ENCODE measurements at regions of chr17 and their contacts with region 1.

Region 1: GRCh38 chr17:39153599-39154051 is 2.2 kb upstream of the PLXDC1 start:
- DNase-seq: peak; percentile 90 to 94
- ATAC-seq: peak; percentile 65 to 69
- H3K4me3 ChIP-seq: peak overlapping the region; percentile 89
- H3K27ac ChIP-seq: peak overlapping the region; percentile 76 to 87
- H3K4me1 ChIP-seq: peaks cover 7% of the 10 kb centered on the region
- CTCF ChIP-seq: no peak; the same call in 2 of the 3 replicates
- EP300 ChIP-seq: no peak
- POLR2A ChIP-seq: no peak
- RAD21 ChIP-seq: no peak

Region 2: DNA sequence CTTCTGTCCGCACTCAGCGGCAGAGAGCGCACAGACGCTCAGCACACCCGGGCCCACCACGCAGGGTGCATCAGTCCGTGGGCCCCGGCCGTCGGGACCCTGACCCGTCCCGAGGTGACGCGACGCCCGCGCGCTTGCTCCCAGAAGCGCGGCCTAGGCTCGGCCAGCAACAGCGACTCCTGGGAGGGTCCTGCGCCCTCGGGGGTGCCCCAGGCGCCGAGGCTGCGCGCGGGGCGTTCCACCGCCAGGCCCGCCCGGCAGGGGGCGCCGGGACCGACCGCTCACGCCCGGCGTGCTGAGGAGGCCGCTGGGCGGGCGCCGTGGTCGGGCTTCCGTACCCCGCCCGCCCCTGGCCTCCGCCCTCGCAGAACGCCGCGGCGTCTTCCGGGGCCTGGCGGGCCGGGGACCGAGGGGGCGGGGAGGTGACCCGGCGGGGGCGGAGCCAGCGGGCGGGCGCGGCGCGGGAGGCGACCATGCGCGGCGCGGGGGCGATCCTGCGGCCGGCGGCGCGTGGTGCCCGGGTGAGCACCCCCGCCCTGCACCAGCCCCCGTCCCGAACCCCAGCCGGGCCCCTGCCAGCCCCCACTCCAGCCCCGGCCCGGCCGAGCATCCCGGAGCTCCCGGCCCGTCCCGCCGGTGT is 423.6 kb before region 1 on chr17 and contains the start of gene CISD3:
- CTCF ChIA-PET with region 1: interaction called, 11 read pairs
- POLR2A ChIA-PET with region 1: no interaction called
- DNase-seq: peak; percentile 86 to 88
- ATAC-seq: peak; percentile 77 to 79
- H3K4me3 ChIP-seq: peak within 1 kb of the TSS; percentile 77
- H3K27ac ChIP-seq: peak within 1 kb of the TSS; percentile 91 to 95
- H3K4me1 ChIP-seq: peaks cover 43% of the 10 kb centered on the region
- CTCF ChIP-seq: peak; percentile 98
- EP300 ChIP-seq: no peak
- POLR2A ChIP-seq: peak; percentile 59
- RAD21 ChIP-seq: peak; percentile 19 to 56; a peak in 4 of 5 replicates
- polyA plus RNA-seq, gene CISD3: 24.5 and 32.6 TPM in 2 replicates

Region 3: GRCh38 chr17:38868817-38869525 is 284.7 kb before region 1 on chr17:
- CTCF ChIA-PET with region 1: interaction called, 12 read pairs
- POLR2A ChIA-PET with region 1: interaction called, 11 read pairs
- DNase-seq: peak; percentile 92 to 93
- ATAC-seq: peak; percentile 25 to 65
- H3K4me3 ChIP-seq: peak overlapping the region; percentile 94
- H3K27ac ChIP-seq: peak overlapping the region; percentile 98
- H3K4me1 ChIP-seq: peaks cover 23% of the 10 kb centered on the region
- CTCF ChIP-seq: peak; percentile 51
- EP300 ChIP-seq: 0 out of 5 replicates have a peak, but pooled peaks of 1 of the 2 experiments have one; percentile 10
- POLR2A ChIP-seq: 0 out of 2 replicates have a peak, but pooled peaks have one; percentile 12
- RAD21 ChIP-seq: peak in 1 of 2 experiments; percentile 14; a peak in 1 of 5 replicates

Region 4: DNA sequence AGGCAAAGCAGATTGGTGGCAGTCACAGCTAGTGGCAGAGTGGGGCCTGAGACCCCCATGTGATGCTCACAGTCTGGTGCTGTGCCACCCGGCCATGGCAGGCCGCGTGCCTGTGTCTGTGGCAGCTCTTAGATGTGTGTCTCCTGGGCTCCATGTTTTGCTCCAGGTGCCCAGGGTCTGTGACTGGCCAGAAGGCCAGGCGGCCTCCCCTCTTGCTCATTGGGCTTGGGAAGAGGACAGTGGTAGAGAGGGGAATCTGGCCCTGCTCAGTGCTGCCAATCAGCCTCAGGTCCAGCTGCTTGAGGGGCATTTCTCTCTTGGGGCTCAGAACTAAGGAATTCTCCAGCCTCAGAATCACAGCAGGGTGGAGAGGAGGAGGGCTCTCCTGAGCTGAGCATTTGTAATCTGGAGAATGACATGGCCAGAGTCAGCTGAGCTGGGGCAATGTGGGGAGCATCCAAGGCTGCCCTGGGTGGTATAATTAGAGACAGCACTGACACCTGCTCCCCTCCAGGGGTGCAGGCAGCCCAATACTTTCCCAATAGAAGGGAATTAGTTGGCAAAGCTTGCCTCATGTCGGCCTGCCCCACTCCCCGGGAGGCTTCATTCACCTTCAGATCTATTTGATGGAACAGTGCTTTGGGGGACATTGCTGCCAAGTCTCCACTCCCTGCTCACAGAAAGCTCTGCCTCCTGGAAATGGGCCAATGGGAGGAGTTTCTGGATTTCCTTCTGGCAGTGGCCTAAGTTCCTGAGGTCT is 230.9 kb before region 1 on chr17:
- CTCF ChIA-PET with region 1: interaction called, 12 read pairs
- POLR2A ChIA-PET with region 1: interaction called, 3 read pairs
- DNase-seq: no peak
- ATAC-seq: peak; percentile 59 to 63
- H3K4me3 ChIP-seq: no peak overlapping the region
- H3K27ac ChIP-seq: peak overlapping the region in 1 of 2 experiments; percentile 45; a peak in 3 of 6 replicates
- H3K4me1 ChIP-seq: peaks cover 11% of the 10 kb centered on the region; the same call in 1 of the 3 replicates
- CTCF ChIP-seq: no peak
- EP300 ChIP-seq: no peak
- POLR2A ChIP-seq: no peak
- RAD21 ChIP-seq: no peak

Region 5: GRCh38 chr17:38994026-38994425 is 159.6 kb before region 1 on chr17:
- CTCF ChIA-PET with region 1: interaction called, 24 read pairs
- POLR2A ChIA-PET with region 1: no interaction called
- DNase-seq: no peak
- ATAC-seq: no peak
- H3K4me3 ChIP-seq: no peak overlapping the region
- H3K27ac ChIP-seq: no peak overlapping the region
- H3K4me1 ChIP-seq: no peaks in the 10 kb centered on the region
- CTCF ChIP-seq: no peak
- EP300 ChIP-seq: no peak
- POLR2A ChIP-seq: no peak
- RAD21 ChIP-seq: no peak

Region 6: DNA sequence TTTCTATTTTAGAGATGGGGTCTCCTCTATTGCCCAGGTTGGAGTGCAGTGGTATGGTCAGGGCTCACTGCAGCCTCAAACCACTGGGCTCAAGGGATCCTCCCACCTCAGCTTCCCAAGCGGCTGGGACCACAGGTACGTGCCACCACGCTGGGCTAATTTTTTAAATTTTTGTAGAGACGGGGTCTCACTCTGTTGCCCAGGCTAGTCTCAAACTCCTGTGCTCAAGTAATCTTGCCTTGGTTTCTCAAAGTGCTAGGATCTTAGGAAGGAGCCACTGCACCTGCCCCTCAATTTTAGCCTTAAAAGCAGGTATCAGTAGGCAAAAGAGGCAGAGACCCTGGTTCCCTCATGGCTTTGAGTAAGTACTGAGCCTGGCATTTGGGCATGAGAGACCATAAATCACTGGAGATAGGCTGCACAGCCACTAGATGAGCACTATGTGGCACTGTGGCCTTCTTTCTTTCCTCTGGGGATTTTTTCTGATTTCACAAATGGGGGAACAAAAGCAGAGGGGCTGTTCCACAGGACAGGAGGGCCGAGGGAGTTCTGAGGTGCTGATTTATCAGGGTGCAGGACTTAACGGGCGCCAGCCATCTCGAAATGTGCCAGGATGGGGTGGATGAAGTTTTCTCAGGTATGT is 84.4 kb before region 1 on chr17:
- CTCF ChIA-PET with region 1: interaction called, 21 read pairs
- POLR2A ChIA-PET with region 1: no interaction called
- DNase-seq: peak; percentile 58 to 93
- ATAC-seq: peak; percentile 75 to 92; a peak in 5 of 6 replicates
- H3K4me3 ChIP-seq: no peak overlapping the region
- H3K27ac ChIP-seq: no peak overlapping the region
- H3K4me1 ChIP-seq: no peaks in the 10 kb centered on the region
- CTCF ChIP-seq: peak; percentile 66
- EP300 ChIP-seq: no peak
- POLR2A ChIP-seq: no peak
- RAD21 ChIP-seq: peak; percentile 63 to 73

Region 7: DNA sequence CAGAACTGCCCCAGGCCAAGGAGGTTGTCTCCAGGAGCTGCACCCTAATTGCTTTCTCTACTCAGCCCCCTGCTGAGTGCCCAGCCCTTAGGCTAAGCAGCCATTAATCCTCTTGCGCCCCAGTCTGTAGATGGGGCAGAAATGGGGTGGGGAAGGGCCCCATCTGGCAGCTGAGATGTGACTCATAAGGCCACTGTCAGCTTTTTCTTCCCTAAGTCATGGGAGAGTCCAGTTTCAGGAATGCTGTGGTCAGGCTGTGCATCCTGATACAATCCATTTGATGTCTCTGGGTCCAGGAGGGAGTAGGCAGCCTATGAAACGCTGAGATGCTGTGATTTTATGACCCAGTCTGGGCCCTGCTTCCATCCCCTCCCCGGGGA is 14.5 kb before region 1 on chr17:
- CTCF ChIA-PET with region 1: interaction called, 25 read pairs
- POLR2A ChIA-PET with region 1: interaction called, 5 read pairs
- DNase-seq: peak in 1 of 2 experiments; percentile 48
- ATAC-seq: peak; percentile 53 to 54; a peak in 3 of 6 replicates
- H3K4me3 ChIP-seq: no peak overlapping the region
- H3K27ac ChIP-seq: no peak overlapping the region
- H3K4me1 ChIP-seq: no peaks in the 10 kb centered on the region
- CTCF ChIP-seq: no peak
- EP300 ChIP-seq: no peak
- POLR2A ChIP-seq: no peak
- RAD21 ChIP-seq: no peak

Region 8: GRCh38 chr17:39222866-39223834 is 69.5 kb after region 1 on chr17:
- CTCF ChIA-PET with region 1: no interaction called
- POLR2A ChIA-PET with region 1: no interaction called
- DNase-seq: no peak
- ATAC-seq: peak; percentile 19 to 21; a peak in 4 of 6 replicates
- H3K4me3 ChIP-seq: no peak overlapping the region
- H3K27ac ChIP-seq: peak overlapping the region in 1 of 2 experiments; percentile 39; a peak in 1 of 6 replicates
- H3K4me1 ChIP-seq: peaks cover 23% of the 10 kb centered on the region
- CTCF ChIP-seq: no peak
- EP300 ChIP-seq: no peak
- POLR2A ChIP-seq: no peak
- RAD21 ChIP-seq: no peak

Region 9: GRCh38 chr17:40417609-40418427 is 1264.2 kb after region 1 on chr17 and contains the start of gene TOP2A:
- CTCF ChIA-PET with region 1: no interaction called
- POLR2A ChIA-PET with region 1: no interaction called
- DNase-seq: peak; percentile 100
- ATAC-seq: peak; percentile 95 to 96
- H3K4me3 ChIP-seq: peak within 1 kb of the TSS; percentile 68
- H3K27ac ChIP-seq: peak within 1 kb of the TSS; percentile 79 to 92
- H3K4me1 ChIP-seq: peaks cover 39% of the 10 kb centered on the region
- CTCF ChIP-seq: no peak
- EP300 ChIP-seq: no peak
- POLR2A ChIP-seq: peak; percentile 62
- RAD21 ChIP-seq: no peak
- polyA plus RNA-seq, gene TOP2A: 273 and 416 TPM in 2 replicates